Common myeloid progenitor, CD34-positive (primary cell): ENCODE measurements at regions of chr1 and their contacts with region 1.

Region 1: GRCh38 chr1:16366722-16367257 is at the start of gene SZRD1:
- DNase-seq: peak; percentile 99 to 100 (median 100)
- H3K4me3 ChIP-seq: peak within 1 kb of the TSS; percentile 75 to 98 (median 90)
- H3K27ac ChIP-seq: peak within 1 kb of the TSS; percentile 94 to 98
- H3K4me1 ChIP-seq: peaks cover 19 to 49% (median 37%) of the 10 kb centered on the region in 4 experiments
- H3K27me3 ChIP-seq: no peaks in the 10 kb centered on the region

Region 2: DNA sequence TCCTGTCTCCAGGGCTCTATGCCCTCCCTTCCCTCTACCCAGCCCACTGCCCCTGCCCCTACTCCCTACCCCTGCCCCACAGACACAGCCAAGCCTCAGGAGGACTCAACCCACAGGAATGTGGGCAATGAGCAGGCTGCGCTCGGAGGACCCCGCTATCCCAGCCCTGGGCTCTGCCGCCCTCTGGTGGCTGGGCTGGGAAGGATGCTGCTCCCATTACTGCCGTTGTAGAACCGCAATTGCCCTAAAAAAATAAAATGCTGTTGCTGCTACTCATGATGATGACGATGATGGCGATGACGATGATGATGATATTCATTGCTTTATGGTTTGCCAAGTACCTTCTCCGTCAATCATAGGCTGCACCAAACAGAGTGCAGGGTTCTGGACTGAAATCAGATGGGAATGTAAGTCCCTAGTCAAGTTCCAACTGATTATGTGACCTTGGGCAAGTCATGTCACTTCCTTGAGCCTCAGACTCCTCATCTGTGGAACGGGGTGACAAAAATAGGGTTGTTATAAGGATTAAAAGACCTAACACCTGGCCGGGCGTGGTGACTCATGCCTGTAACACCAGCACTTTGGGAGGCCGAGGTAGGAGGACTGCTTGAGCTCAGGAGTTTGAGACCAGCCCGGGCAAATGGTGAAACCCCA is 178.9 kb before region 1 on chr1:
- CTCF ChIA-PET with region 1: no interaction called
- POLR2A ChIA-PET with region 1: no interaction called
- DNase-seq: peak; percentile 61 to 78 (median 70)
- H3K4me3 ChIP-seq: no peak overlapping the region
- H3K27ac ChIP-seq: no peak overlapping the region
- H3K4me1 ChIP-seq: no peaks in the 10 kb centered on the region
- H3K27me3 ChIP-seq: peaks cover 0 to 6% (median 0%) of the 10 kb centered on the region in 5 experiments

Region 3: DNA sequence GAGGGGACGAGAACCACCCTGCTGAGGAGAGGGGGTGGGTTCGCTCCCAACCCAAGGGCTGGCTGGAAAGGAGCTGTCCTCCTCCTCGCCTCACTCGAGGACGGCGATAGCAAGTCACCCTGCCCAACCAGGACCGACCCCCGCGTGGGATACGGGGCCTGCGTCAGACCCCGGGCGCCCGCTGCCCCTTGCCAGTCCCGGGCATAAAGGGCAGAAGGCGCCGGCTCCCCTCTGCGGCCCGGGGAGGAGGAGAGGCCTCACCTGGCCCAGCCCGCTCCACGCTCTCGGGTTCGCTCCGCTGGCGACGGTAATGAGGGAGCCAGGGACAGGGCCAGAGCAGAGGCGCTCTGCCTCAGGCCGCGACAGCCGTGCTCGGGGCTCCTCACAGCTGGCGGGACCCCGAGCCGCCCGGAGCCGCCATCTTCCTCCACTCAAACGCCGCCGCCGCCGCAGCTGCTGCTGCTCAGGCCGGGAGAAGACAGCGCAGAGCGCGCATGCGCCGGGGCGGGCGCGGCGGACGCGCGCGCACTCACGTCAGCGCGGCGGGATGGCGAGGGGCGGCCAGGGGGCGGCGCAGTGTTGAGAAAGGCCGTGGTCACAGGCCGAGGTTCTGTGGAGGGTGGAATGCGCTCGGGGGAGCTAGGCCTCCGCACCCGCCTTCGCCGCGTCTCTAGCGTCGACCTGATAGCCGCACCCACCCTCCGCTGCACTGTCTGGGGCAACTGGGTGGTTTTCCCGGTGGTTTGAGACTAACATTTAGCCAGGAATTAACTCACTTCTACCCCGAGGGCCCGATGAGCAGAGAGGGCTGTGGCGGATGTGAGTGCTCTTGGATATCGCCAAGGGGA is 14.6 kb before region 1 on chr1 and contains the start of gene FBXO42:
- CTCF ChIA-PET with region 1: interaction called, 48 read pairs
- POLR2A ChIA-PET with region 1: interaction called, 16 read pairs
- DNase-seq: peak; percentile 90 to 96 (median 94)
- H3K4me3 ChIP-seq: peak within 1 kb of the TSS; percentile 67 to 98 (median 89)
- H3K27ac ChIP-seq: peak within 1 kb of the TSS; percentile 82 to 93
- H3K4me1 ChIP-seq: peaks cover 4 to 26% (median 22%) of the 10 kb centered on the region in 4 experiments
- H3K27me3 ChIP-seq: no peaks in the 10 kb centered on the region